ENCODE measurements at regions of chr3 and their contacts with region 1.

Region 1: DNA sequence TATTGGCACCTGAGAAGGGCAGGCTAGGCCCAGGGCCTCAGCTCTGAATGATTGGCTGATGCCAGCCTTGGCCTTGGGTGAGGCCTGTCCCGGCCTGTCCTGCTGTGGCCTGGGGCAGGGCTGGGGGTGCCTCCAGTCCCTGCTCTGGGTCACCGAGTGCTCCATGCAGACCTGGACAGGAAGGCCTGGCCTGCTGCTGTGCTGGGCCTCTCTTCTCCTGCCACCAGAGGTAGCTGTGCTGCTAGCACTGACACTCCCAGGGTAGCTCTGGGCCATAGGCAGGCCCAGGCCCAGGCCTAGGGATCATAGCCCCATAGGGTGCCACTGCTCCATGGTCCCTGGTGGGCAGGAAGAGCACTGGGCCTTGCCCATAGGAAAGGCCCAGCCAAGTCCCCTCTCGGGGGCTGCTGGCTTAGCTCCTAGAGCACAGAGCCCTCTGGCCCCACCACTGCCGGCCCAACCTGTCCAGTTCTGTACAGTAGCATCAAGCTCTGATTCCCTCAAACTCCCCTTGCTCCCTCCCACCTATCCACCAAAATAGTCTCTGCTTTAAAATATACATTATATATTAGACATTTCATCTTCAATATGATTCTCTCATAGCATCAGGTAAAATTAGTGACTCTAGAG is 18.2 kb downstream of the ABTB1 start:
- H3K4me3 Mint-ChIP-seq: no peak overlapping the region
- H3K27ac Mint-ChIP-seq: no peak overlapping the region
- H3K4me1 Mint-ChIP-seq: peaks cover 1% of the 10 kb centered on the region
- H3K27me3 Mint-ChIP-seq: no peaks in the 10 kb centered on the region

Region 2: GRCh38 chr3:127848131-127849129 is 157.5 kb after region 1 on chr3:
- intact Hi-C with region 1: no loop called
- H3K4me3 Mint-ChIP-seq: no peak overlapping the region
- H3K27ac Mint-ChIP-seq: no peak overlapping the region
- H3K4me1 Mint-ChIP-seq: peaks cover 6% of the 10 kb centered on the region
- H3K27me3 Mint-ChIP-seq: peaks cover 10% of the 10 kb centered on the region

Region 3: DNA sequence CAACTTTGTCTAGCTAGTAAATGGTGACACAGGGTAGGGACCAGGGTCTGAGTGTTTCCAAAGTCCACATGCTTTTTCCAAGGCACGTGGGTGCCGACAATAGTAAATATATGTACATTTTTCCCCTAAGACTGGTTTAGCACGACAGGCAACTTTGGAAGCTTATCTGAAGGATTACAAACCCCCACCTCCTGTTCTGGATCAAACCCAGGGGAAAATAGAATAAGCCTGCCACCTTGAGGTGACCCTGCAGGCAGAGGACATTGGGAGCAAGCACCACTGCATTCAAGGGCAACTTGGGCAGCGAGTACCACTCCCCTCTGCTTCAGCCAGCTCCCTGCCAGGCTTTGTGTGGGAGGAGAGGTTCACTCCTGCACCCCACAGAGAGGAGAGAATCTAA is 268.9 kb after region 1 on chr3:
- intact Hi-C with region 1: loop called (anchors 5 kb)
- H3K4me3 Mint-ChIP-seq: no peak overlapping the region
- H3K27ac Mint-ChIP-seq: no peak overlapping the region
- H3K4me1 Mint-ChIP-seq: no peaks in the 10 kb centered on the region
- H3K27me3 Mint-ChIP-seq: peaks cover 4% of the 10 kb centered on the region

Measured in dendritic cell treated with granulocyte-macrophage colony-stimulating factor and Interleukin-4, amounts not matched to agents 40 ng/mL and 50 ng/mL, for 4 days (primary cell).